Mammary epithelial cell (primary cell): ENCODE measurements at regions of chr14 and their contacts with region 1.

Region 1: GRCh38 chr14:31229638-31230229 is 22.1 kb upstream of the HECTD1 start:
- DNase-seq: peak; percentile 97
- H3K4me3 ChIP-seq: no peak overlapping the region
- H3K27ac ChIP-seq: peak overlapping the region; percentile 45
- H3K4me1 ChIP-seq: peaks cover 18% of the 10 kb centered on the region
- H3K27me3 ChIP-seq: no peaks in the 10 kb centered on the region
- CTCF ChIP-seq: no peak

Region 2: DNA sequence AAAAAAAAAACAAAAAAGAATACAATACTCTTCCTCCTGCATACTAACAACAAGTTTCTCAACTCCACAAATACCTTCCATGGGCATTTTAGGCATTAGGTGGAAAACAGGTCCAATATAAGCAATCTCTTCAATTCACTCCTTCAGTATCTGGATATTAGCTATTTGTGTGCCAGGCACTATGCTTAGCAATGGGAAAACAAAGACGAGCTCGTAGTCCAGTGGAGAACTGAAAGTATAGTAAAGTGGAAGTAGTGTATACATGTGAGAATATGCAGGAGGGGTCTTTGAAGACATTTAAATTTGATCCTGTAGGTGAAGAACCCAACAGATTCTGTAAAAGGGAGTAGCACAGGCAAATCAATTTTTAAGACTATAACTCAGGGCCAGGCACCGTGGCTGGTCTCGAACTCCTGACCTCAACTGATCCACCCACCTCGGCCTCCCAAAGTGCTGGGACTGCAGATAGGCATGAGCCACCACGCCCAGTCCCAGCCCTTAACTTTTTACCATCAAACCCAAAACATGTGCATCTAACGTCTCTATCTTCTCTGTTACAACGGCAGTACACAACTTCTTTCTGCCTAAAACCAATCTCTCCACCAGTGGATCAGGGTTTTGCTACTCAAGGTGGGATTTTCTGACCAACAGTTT is 32.8 kb before region 1 on chr14:
- CTCF ChIA-PET with region 1: no interaction called
- dilution Hi-C with region 1: no loop called
- in situ Hi-C with region 1: no loop called
- intact Hi-C with region 1: no loop called
- DNase-seq: no peak
- H3K4me3 ChIP-seq: no peak overlapping the region
- H3K27ac ChIP-seq: no peak overlapping the region
- H3K4me1 ChIP-seq: peaks cover 10% of the 10 kb centered on the region
- H3K27me3 ChIP-seq: no peaks in the 10 kb centered on the region
- CTCF ChIP-seq: no peak

Region 3: DNA sequence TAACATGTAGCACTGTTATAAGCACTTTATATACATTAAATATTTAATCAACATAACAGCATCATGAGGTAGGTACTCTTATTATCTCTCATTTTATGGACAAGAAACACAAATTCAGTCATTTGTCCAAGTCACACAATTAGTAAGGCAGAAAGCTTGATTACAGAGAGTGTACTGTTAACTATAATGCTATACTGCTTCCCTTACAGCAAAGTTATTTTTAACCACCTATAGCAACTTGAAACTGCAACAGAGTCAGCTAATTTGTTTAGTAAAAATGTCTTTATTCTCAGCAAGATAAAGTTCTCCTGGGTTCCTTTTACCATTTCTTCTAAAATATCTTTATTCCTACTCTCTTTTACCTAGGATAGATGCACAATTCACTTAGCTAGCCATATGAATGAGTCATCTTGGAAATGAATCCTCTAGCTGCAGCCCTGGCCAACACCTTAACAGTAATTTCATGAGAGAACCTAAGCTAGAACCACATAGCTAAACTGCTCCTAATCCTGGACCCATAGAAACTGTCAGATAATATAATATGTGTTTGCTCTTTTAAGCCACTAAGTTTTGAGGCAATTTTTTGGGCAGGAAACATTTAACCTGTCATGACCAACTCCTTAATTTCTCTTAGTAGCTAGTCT is 68.1 kb after region 1 on chr14:
- CTCF ChIA-PET with region 1: no interaction called
- dilution Hi-C with region 1: no loop called
- in situ Hi-C with region 1: no loop called
- intact Hi-C with region 1: loop called (anchors 2 kb)
- DNase-seq: peak; percentile 34
- H3K4me3 ChIP-seq: no peak overlapping the region
- H3K27ac ChIP-seq: no peak overlapping the region
- H3K4me1 ChIP-seq: no peaks in the 10 kb centered on the region
- H3K27me3 ChIP-seq: no peaks in the 10 kb centered on the region
- CTCF ChIP-seq: no peak